ENCODE measurements at regions of chr21 and their contacts with region 1.

Region 1: GRCh38 chr21:20774737-20775136 is 223.5 kb upstream of the NCAM2 start:
- DNase-seq: no peak
- ATAC-seq: no peak

Region 2: DNA sequence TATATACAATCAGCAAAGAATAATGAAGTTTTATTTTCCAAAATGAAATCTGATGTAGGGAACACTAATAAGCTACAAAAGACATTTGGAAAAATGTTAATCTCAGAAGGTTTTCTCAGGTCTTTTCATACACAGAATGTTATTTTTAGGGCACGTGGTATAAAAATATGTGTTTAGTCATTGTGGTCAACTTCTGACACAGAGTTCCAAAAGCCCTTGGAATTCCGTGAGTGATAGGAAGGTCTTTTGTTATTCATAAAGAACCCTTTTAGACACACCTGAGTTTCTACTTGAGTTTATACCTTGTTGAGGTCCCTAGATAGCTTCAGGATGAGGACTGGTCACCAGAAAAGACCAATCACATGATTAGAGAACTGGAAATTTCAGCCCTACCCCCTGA is 54.1 kb before region 1 on chr21:
- intact Hi-C with region 1: loop called in 1 of 2 experiments (anchors 10 kb)
- DNase-seq: no peak
- ATAC-seq: no peak